Activated CD4-positive, alpha-beta T cell treated with anti-CD3 and anti-CD28 coated beads, Interleukin-2, amount 10 ng/mL, durations not matched to agents 24 days and 14 days (primary cell): ENCODE measurements at regions of chr3 and their contacts with region 1.

Region 1: GRCh38 chr3:132549890-132550578 is 47.0 kb upstream of the ACKR4 start:
- DNase-seq: peak; percentile 62
- H3K4me3 Mint-ChIP-seq: peak overlapping the region; percentile 70
- H3K27ac Mint-ChIP-seq: peak overlapping the region; percentile 98
- H3K4me1 Mint-ChIP-seq: peaks cover 30% of the 10 kb centered on the region
- H3K27me3 Mint-ChIP-seq: no peaks in the 10 kb centered on the region

Region 2: GRCh38 chr3:132522353-132522752 is 27.7 kb before region 1 on chr3:
- intact Hi-C with region 1: loop called (anchors 1 kb)
- DNase-seq: peak; percentile 72
- H3K4me3 Mint-ChIP-seq: peak overlapping the region; percentile 47
- H3K27ac Mint-ChIP-seq: peak overlapping the region; percentile 31
- H3K4me1 Mint-ChIP-seq: peaks cover 27% of the 10 kb centered on the region
- H3K27me3 Mint-ChIP-seq: no peaks in the 10 kb centered on the region

Region 3: GRCh38 chr3:132569153-132569552 is 19.1 kb after region 1 on chr3:
- intact Hi-C with region 1: loop called (anchors 1 kb)
- DNase-seq: no peak
- H3K4me3 Mint-ChIP-seq: peak overlapping the region; percentile 6
- H3K27ac Mint-ChIP-seq: peak overlapping the region; percentile 86
- H3K4me1 Mint-ChIP-seq: peaks cover 18% of the 10 kb centered on the region
- H3K27me3 Mint-ChIP-seq: no peaks in the 10 kb centered on the region

Region 4: DNA sequence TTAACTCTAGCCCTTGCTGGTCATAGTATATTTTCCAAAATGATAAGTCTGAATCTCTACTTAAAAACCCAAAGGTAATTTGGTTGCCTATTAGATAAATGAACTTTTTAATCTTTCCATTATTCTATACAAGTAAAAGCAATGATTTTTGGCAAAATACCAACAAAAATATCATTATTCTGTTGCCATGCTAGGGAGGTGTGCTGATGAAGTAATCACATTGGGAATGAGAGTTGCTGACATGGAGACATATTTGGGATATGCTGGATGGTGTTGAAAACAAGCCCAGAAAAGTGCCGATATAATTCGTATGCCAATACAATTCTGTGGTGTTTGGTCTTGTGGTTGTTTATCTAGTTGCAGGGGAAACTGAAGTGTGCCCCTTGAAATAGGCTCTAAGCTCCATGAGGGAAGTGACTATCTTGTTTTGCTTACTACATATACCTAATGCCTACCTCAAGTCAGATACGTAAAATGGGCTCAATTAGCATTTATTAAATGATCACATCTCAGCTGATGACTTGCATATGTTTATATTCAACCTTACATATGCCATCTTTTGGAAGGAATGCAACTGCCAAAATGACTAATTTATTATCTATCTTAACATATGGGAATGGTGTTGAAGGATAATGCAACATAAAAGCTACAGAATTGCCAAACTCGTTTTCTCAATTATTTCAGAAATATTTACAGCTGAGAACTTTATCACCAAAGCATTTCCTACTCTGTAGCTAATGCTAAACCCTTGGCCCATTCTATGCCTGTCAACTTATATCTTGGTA is 1105.9 kb after region 1 on chr3:
- intact Hi-C with region 1: no loop called
- DNase-seq: no peak
- H3K4me3 Mint-ChIP-seq: no peak overlapping the region
- H3K27ac Mint-ChIP-seq: no peak overlapping the region
- H3K4me1 Mint-ChIP-seq: peaks cover 18% of the 10 kb centered on the region
- H3K27me3 Mint-ChIP-seq: no peaks in the 10 kb centered on the region